CD4-positive, alpha-beta memory T cell (primary cell): ENCODE measurements at regions of chr5 and their contacts with region 1.

Region 1: GRCh38 chr5:134304311-134304710 is 62.7 kb downstream of the CDKL3 start:
- DNase-seq: no peak
- H3K4me3 ChIP-seq: no peak overlapping the region
- H3K4me3 Mint-ChIP-seq: no peak overlapping the region
- H3K27ac ChIP-seq: no peak overlapping the region
- H3K27ac Mint-ChIP-seq: no peak overlapping the region
- H3K4me1 ChIP-seq: no peaks in the 10 kb centered on the region
- H3K4me1 Mint-ChIP-seq: no peaks in the 10 kb centered on the region
- H3K27me3 ChIP-seq: no peaks in the 10 kb centered on the region
- H3K27me3 Mint-ChIP-seq: no peaks in the 10 kb centered on the region

Region 2: DNA sequence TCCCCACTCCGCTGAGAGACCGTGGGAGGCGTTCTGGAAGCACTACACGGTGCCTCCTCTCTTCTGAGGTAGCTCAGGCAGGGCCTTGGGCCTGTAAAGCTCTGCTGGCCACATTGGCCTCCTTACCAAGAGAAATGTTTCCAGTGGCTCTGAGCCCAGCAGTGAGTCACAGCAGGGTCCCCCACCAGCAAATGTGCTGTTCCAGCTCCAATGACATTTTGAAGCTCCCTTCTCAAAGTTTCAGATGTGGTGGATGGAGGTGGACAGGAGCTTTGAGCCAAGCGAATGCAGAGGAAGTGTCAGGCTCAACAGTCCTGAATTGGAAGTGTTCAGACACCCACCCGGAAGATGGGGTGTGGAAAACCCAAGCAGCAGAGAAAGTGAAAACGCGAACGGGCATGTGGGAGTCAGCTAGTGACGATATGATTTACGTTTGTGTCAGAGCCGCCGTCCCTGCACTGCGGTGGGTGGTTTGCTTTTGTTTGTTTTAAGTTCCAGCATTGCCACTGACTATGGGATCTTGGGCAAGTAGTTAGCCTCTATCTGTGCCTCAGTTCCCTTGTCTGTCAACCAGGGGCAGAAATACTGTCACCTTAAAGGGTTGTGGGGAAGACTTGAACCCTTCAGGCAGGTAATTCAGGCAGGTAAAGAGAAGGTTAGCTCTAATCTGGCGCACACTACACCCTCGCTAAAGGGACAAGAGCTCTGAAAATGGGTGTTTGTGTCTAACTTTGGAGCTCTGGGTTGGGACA is 374.1 kb before region 1 on chr5:
- CTCF ChIA-PET with region 1: no interaction called
- POLR2A ChIA-PET with region 1: no interaction called
- intact Hi-C with region 1: no loop called
- DNase-seq: peak; percentile 57 to 66 (median 63)
- H3K4me3 ChIP-seq: peak overlapping the region; percentile 49 to 55
- H3K4me3 Mint-ChIP-seq: peak overlapping the region; percentile 83 to 94 (median 89)
- H3K27ac ChIP-seq: peak overlapping the region; percentile 50
- H3K27ac Mint-ChIP-seq: peak overlapping the region; percentile 70 to 96 (median 93)
- H3K4me1 ChIP-seq: peaks cover 21% of the 10 kb centered on the region
- H3K4me1 Mint-ChIP-seq: peaks cover 11 to 34% (median 18%) of the 10 kb centered on the region in 4 donors
- H3K27me3 ChIP-seq: no peaks in the 10 kb centered on the region
- H3K27me3 Mint-ChIP-seq: peaks cover 0 to under 1% of the 10 kb centered on the region in 2 donors

Region 3: DNA sequence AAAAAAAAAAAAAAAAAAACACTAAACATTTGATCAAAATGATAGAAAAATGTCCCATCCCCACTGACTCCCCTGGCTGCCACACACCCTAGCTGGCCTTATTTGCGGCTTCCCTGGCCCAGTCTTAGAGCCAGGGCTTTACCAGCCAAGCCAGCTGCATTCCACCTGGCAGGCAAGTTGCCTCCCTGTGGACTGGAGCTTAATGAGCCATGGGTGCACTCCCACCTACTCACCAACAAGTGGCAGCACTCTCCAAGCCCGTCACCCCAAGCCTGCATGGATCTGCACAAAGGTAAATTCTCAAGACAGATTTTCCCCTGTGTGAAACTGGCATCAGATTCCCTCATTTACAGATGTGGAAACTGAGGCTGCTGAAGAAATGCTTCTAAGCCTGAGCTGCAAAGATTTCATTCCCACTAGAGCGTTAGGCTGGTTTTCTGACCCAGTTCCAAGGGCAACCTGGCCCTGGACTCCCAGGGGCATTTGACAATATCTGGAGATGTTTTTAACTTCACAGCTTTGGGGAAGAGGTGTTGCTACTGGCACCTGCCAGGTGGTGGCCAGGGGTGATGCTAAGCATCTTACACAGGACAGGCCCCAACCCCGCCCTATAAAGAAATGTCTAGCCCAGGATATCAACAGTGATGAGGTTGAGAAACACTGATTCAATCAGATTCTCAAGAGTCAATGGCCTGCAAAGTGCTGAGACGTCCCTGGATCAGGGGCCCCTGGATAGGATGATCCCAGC is 277.6 kb before region 1 on chr5:
- CTCF ChIA-PET with region 1: no interaction called
- POLR2A ChIA-PET with region 1: no interaction called
- intact Hi-C with region 1: no loop called
- DNase-seq: peak; percentile 41 to 64 (median 48)
- H3K4me3 ChIP-seq: no peak overlapping the region
- H3K4me3 Mint-ChIP-seq: no peak overlapping the region
- H3K27ac ChIP-seq: no peak overlapping the region
- H3K27ac Mint-ChIP-seq: peak overlapping the region in 1 of 7 donors; percentile 70
- H3K4me1 ChIP-seq: no peaks in the 10 kb centered on the region
- H3K4me1 Mint-ChIP-seq: peaks cover 0 to 2% (median 0%) of the 10 kb centered on the region in 4 donors
- H3K27me3 ChIP-seq: no peaks in the 10 kb centered on the region
- H3K27me3 Mint-ChIP-seq: peaks cover 0 to 9% of the 10 kb centered on the region in 2 donors

Region 4: GRCh38 chr5:134465816-134466240 is 161.5 kb after region 1 on chr5:
- CTCF ChIA-PET with region 1: no interaction called
- POLR2A ChIA-PET with region 1: no interaction called
- intact Hi-C with region 1: no loop called
- DNase-seq: peak; percentile 20 to 49 (median 30)
- H3K4me3 ChIP-seq: peak overlapping the region; percentile 61
- H3K4me3 Mint-ChIP-seq: peak overlapping the region; percentile 82 to 90 (median 88)
- H3K27ac ChIP-seq: peak overlapping the region; percentile 42
- H3K27ac Mint-ChIP-seq: peak overlapping the region; percentile 47 to 90 (median 85)
- H3K4me1 ChIP-seq: peaks cover 21% of the 10 kb centered on the region
- H3K4me1 Mint-ChIP-seq: peaks cover 2 to 26% (median 12%) of the 10 kb centered on the region in 4 donors
- H3K27me3 ChIP-seq: no peaks in the 10 kb centered on the region
- H3K27me3 Mint-ChIP-seq: no peaks in the 10 kb centered on the region

Region 5: DNA sequence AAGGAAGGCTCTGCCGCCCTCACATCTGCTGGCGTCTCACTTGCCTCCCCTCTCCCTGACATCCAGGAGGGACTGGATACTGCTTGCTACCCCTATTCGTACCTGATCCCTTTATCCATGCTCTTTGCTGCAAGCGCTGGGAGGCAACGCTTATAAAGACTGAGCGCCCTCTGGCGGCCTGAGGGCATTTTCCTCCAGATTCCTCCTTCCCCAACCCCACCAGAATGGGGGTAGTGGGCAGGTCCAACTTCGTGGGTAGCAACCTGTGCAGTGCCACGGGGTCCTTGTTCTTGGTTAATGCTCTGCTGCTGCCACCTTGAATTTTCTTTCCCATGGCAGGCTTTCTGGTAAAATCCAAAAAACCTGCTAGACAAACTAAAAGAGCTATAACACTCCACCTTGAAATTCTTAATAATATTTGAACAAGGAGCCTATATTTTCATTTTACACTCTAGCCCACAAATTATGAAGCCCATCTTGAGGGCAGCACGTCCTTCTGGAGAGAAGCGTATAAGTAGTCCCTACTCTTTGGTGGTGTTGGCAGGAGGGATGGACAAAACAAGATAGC is 273.6 kb after region 1 on chr5:
- CTCF ChIA-PET with region 1: interaction called, 15 read pairs
- POLR2A ChIA-PET with region 1: no interaction called
- intact Hi-C with region 1: no loop called
- DNase-seq: peak; percentile 65 to 70 (median 69)
- H3K4me3 ChIP-seq: no peak overlapping the region
- H3K4me3 Mint-ChIP-seq: no peak overlapping the region
- H3K27ac ChIP-seq: no peak overlapping the region
- H3K27ac Mint-ChIP-seq: peak overlapping the region; percentile 28 to 86 (median 78)
- H3K4me1 ChIP-seq: no peaks in the 10 kb centered on the region
- H3K4me1 Mint-ChIP-seq: peaks cover 3 to 17% (median 14%) of the 10 kb centered on the region in 4 donors
- H3K27me3 ChIP-seq: no peaks in the 10 kb centered on the region
- H3K27me3 Mint-ChIP-seq: no peaks in the 10 kb centered on the region

Region 6: DNA sequence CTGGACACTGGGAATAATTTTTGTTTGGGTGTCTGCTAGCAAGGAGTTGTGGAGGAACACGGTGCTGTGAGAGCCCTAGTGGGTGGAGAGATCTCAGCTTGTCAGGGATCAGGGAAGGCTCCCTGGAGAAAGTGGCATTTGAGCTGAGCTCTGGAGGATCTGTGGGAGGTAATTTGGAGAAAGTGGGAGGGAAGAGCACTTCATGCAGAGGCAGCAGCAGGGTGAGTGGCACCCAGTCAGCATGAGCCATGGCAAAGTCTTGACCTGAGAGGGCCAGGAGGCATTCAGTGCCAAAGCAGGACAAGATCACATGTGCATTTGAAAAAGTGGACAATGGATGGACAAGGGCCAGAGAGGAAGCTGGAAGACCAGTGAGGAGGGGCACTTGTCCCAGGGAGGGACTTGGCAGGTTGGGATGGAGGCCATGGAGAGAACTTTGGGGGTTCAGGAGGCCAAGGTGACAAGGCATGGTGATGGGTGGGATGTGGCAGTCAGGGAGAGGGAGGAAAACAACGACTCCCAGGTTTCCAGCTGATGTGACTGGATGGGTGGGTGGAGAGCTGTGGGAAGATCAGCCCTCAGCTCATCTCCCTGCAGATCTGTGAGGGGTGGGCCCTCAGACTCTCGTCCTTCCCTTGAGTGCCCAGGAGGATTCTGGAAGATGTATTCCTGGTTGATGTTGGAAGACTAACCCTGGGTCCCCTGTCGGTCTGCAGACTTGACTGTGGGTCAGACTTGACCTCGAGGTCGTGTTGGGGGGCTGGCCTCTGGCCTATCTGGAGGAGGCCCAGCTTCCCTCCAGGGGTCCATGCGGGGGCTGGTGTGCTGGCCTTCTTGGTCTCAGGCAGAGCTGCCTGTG is 798.6 kb after region 1 on chr5:
- CTCF ChIA-PET with region 1: no interaction called
- POLR2A ChIA-PET with region 1: no interaction called
- intact Hi-C with region 1: no loop called
- DNase-seq: no peak
- H3K4me3 ChIP-seq: no peak overlapping the region
- H3K4me3 Mint-ChIP-seq: no peak overlapping the region
- H3K27ac ChIP-seq: no peak overlapping the region
- H3K27ac Mint-ChIP-seq: no peak overlapping the region
- H3K4me1 ChIP-seq: no peaks in the 10 kb centered on the region
- H3K4me1 Mint-ChIP-seq: no peaks in the 10 kb centered on the region
- H3K27me3 ChIP-seq: no peaks in the 10 kb centered on the region
- H3K27me3 Mint-ChIP-seq: peaks cover 3% of the 10 kb centered on the region in 2 donors